GM10248 (cell line): ENCODE measurements at regions of chr17 and their contacts with region 1.

Region 1: DNA sequence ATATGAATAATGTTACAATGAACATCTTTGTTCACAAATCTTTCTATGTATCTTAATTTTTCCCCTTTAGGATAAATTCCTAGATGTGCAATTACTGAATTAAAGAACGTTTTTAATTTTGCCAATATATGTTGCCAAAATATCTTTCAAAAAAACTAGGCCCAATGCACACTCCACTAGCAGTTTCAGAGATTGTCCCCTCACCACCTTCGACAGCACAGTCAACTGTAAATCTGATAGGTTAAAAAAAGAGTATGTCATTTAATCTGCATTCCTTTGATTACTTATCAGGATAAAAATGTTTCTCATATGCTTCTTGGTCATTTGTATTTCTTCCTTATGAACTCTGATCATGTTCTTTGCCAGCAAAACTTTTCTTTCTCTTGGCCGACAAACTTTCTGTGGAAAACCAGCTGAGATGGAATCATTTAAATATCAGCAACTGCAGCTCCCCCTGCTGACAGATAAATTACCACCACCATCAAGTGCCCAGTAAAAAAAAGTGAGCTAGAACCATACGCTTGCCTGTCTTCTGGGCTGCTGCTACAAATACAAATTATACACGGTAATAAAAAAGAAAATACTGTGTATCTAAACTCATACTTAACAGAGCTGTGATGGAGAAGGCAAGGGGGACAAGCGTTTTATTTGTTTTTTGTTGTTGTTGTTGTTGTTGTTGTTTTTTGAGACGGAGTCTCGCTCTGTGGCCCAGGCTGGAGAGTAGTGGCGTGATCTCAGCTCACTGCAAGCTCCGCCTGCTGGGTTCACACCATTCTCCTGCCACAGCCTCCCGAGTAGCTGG is 19.6 kb upstream of the KANSL1 start:
- DNase-seq: peak; percentile 73
- CTCF ChIP-seq: peak; percentile 49

Region 2: GRCh38 chr17:46035112-46035818 is 177.6 kb before region 1 on chr17:
- CTCF ChIA-PET with region 1: interaction called, 16 read pairs
- POLR2A ChIA-PET with region 1: no interaction called
- DNase-seq: no peak
- CTCF ChIP-seq: no peak

Region 3: DNA sequence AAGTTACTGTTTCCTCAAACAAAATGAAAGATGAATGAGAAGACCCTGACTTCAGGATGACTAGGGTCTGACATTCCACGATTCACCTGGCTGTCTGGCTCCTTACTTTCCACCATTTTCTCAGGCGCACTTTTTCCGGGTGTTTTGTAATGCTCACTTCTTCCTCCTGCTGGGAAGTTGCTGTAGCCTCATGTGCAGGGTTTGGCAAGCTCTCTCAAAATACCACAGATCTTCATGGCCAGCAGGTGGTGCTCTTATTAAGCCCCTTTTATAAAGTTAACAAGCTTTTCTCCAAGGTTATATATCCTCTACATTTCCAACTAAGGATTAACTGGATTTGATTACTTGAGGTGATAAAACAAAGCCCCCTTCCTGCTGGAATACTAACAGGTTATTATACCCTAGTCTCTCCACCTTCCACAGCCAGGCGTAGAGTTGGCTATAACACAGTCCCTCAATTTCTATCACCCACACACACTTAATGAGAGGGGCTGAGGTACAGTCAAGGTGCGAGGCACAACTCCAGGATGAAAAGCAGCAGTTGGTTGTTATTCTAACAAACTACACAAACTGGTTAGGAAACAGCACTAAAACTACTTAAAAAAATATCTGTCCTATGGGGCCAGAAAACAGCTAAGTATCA is 168.4 kb before region 1 on chr17:
- CTCF ChIA-PET with region 1: interaction called, 25 read pairs
- POLR2A ChIA-PET with region 1: no interaction called
- DNase-seq: no peak
- CTCF ChIP-seq: peak; percentile 66

Region 4: DNA sequence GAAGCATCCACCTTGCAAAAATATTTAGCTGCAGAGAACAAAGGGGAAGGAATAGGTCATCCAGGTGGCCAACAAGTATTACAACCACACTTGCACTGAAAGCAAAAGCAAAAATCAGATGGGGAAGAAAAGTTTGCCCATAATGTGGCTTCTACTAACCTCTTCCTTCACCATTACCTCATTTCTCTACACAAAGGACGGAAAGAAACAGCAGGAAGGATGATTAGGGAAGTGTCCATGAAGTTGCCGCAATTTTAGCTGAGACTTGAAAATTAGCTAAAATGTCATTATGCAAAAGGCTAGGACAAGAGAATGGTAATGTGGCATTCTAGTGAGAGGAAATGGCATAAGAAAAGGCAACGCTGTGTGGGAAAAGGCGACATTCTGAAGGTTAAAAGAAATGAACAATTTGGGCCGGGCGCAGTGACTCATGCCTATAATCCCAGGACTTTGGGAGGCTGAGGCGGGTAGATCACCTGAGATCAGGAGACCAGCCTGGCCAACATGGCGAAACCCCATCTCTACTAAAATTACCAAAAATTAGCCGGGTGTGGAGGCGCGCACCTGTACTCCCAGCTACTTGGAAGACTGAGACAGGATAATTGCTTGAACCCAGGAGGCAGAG is 33.3 kb before region 1 on chr17:
- CTCF ChIA-PET with region 1: no interaction called
- POLR2A ChIA-PET with region 1: no interaction called
- DNase-seq: peak; percentile 56
- CTCF ChIP-seq: no peak

Region 5: GRCh38 chr17:46199379-46199778 is 13.5 kb before region 1 on chr17:
- CTCF ChIA-PET with region 1: interaction called, 41 read pairs
- POLR2A ChIA-PET with region 1: interaction called, 3 read pairs
- DNase-seq: no peak
- CTCF ChIP-seq: no peak